CD4-positive, alpha-beta T cell (primary cell): ENCODE measurements at regions of chr21 and their contacts with region 1.

Region 1: DNA sequence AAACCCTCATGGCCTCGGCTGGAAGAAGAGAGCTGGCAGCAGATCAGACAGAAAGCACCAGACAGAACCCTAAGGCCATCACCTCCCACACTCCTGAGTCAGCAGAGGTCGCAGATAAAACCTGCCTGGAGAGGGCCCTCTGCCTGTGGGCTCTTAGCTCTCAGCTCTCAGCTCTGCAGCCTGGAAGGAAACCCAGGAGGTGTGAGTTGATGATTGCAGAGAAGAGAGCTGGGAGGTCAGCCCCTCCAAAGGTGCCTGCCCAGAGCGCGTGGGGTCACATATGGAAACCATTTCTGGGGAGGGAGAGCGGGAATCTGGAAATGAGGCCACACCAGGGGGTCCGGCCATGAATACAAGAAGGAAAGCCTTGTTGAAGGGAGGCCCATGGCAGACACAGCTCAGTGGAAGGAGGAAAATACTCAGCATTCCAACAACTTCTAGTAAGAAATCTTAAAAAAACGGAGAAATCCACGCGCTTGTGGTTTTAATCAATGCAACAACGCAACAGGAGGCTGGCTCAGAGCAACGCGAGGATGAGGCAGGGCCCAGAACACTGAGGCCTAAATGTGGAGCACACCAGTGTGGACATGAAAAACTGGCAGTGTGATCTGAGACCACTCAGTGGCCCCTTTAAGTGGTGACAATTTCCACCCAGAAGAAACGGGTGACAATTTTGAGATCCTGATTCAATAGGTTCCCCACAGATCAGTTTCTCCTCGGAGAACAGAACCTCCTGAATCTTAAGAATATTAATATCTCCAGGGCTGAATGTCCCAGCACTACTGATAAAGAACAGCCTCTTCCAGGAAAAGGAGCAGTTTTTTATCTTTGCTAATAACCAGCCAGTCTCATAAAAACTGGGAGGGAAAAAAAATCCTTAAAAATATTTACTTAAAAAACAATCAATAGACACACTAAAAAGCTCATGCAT is 45.7 kb downstream of the PSMG1 start:
- DNase-seq: no peak
- ATAC-seq: no peak
- H3K4me3 ChIP-seq: no peak overlapping the region
- H3K4me3 Mint-ChIP-seq: no peak overlapping the region
- H3K27ac ChIP-seq: no peak overlapping the region
- H3K27ac Mint-ChIP-seq: no peak overlapping the region
- H3K4me1 ChIP-seq: no peaks in the 10 kb centered on the region
- H3K4me1 Mint-ChIP-seq: no peaks in the 10 kb centered on the region
- H3K27me3 ChIP-seq: peaks cover 0 to 2% of the 10 kb centered on the region in 2 experiments
- H3K27me3 Mint-ChIP-seq: peaks cover 4% of the 10 kb centered on the region
- CTCF ChIP-seq: no peak

Region 2: DNA sequence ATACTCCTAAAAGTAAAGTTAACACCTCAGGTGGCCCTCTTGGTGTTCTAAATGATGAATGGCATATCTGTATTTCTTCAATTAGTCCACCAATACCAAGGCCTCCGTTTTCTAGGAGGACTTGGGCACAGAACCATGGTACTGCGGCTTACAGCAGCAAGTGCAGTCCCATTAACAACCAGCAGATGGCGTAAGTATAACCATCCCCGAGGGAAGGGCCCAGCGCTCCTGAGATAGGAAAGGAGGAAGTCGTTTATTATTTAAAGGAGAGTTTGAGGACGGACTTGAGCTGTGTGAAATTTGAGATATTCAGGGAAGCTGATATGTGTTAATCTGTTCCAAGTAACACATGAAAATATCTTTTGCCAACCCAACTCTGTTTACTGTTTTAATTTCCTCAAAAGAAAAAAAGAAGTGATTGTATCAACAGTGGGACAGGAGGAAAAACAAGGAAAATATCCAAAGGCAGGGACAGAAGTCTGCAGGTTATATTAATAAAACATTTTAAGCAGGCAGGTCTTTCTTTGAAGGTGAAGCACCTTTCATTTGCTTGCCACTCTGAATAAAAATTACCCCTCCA is 918.4 kb before region 1 on chr21:
- CTCF ChIA-PET with region 1: no interaction called
- POLR2A ChIA-PET with region 1: no interaction called
- intact Hi-C with region 1: loop called in 1 of 2 experiments (anchors 5 kb)
- DNase-seq: peak; percentile 29 to 83 (median 54)
- ATAC-seq: peak; percentile 67
- H3K4me3 ChIP-seq: no peak overlapping the region
- H3K4me3 Mint-ChIP-seq: no peak overlapping the region
- H3K27ac ChIP-seq: no peak overlapping the region
- H3K27ac Mint-ChIP-seq: no peak overlapping the region
- H3K4me1 ChIP-seq: peaks cover 3% of the 10 kb centered on the region
- H3K4me1 Mint-ChIP-seq: no peaks in the 10 kb centered on the region
- H3K27me3 ChIP-seq: no peaks in the 10 kb centered on the region
- H3K27me3 Mint-ChIP-seq: no peaks in the 10 kb centered on the region
- CTCF ChIP-seq: peak; percentile 96

Region 3: GRCh38 chr21:38505654-38506515 is 631.6 kb before region 1 on chr21:
- CTCF ChIA-PET with region 1: no interaction called
- POLR2A ChIA-PET with region 1: no interaction called
- intact Hi-C with region 1: loop called in 1 of 2 experiments (anchors 5 kb)
- DNase-seq: peak in 2 of 14 experiments; percentile 49 to 53
- ATAC-seq: no peak
- H3K4me3 ChIP-seq: no peak overlapping the region
- H3K4me3 Mint-ChIP-seq: peak overlapping the region; percentile 30
- H3K27ac ChIP-seq: no peak overlapping the region
- H3K27ac Mint-ChIP-seq: no peak overlapping the region
- H3K4me1 ChIP-seq: peaks cover 6% of the 10 kb centered on the region
- H3K4me1 Mint-ChIP-seq: peaks cover 15% of the 10 kb centered on the region
- H3K27me3 ChIP-seq: peaks cover 8 to 13% of the 10 kb centered on the region in 2 experiments
- H3K27me3 Mint-ChIP-seq: peaks cover 46% of the 10 kb centered on the region
- CTCF ChIP-seq: peak; percentile 37

Region 4: DNA sequence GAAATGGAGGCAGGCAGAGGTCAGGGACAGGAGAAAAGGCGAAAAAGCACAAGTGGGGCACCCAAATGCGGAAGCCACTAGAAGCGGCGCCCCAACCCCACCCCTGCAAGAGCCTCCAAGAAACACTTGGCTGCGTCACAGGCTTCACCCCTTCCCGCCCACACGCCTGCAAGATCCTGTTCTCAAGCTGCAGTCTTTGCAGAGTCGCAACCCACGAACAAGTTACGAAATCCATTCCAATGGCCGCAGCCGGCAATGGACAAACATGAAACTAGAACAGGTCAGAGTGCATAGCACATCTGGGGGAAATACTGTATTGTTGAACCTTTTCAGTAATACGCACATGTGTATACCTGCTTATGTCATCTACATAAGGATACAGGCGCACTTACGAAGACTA is 57.9 kb before region 1 on chr21:
- CTCF ChIA-PET with region 1: no interaction called
- POLR2A ChIA-PET with region 1: no interaction called
- intact Hi-C with region 1: no loop called
- DNase-seq: peak in 3 of 14 experiments; percentile 37 to 71 (median 56)
- ATAC-seq: no peak
- H3K4me3 ChIP-seq: no peak overlapping the region
- H3K4me3 Mint-ChIP-seq: no peak overlapping the region
- H3K27ac ChIP-seq: no peak overlapping the region
- H3K27ac Mint-ChIP-seq: no peak overlapping the region
- H3K4me1 ChIP-seq: no peaks in the 10 kb centered on the region
- H3K4me1 Mint-ChIP-seq: no peaks in the 10 kb centered on the region
- H3K27me3 ChIP-seq: no peaks in the 10 kb centered on the region
- H3K27me3 Mint-ChIP-seq: peaks cover 6% of the 10 kb centered on the region
- CTCF ChIP-seq: no peak